Psoas muscle (tissue), 8 donors: ENCODE measurements at regions of chr10 and their contacts with region 1.

Region 1: GRCh38 chr10:129883626-129884396 is 80.3 kb downstream of the EBF3 start:
- DNase-seq: no peak
- ATAC-seq: no peak
- H3K4me3 ChIP-seq: no peak overlapping the region
- H3K27ac ChIP-seq: no peak overlapping the region
- H3K4me1 ChIP-seq: peaks cover 22% of the 10 kb centered on the region
- H3K27me3 ChIP-seq: no peaks in the 10 kb centered on the region
- CTCF ChIP-seq: no peak

Region 2: GRCh38 chr10:129863201-129863663 is 20.6 kb before region 1 on chr10:
- intact Hi-C with region 1: loop called in 1 of 2 experiments (anchors 2 kb)
- DNase-seq: peak in 1 of 2 donors; percentile 47
- ATAC-seq: no peak
- H3K4me3 ChIP-seq: no peak overlapping the region
- H3K27ac ChIP-seq: no peak overlapping the region
- H3K4me1 ChIP-seq: peaks cover 3% of the 10 kb centered on the region
- H3K27me3 ChIP-seq: no peaks in the 10 kb centered on the region
- CTCF ChIP-seq: no peak